AG04449 (cell line): ENCODE measurements at regions of chr17 and their contacts with region 1.

Region 1: DNA sequence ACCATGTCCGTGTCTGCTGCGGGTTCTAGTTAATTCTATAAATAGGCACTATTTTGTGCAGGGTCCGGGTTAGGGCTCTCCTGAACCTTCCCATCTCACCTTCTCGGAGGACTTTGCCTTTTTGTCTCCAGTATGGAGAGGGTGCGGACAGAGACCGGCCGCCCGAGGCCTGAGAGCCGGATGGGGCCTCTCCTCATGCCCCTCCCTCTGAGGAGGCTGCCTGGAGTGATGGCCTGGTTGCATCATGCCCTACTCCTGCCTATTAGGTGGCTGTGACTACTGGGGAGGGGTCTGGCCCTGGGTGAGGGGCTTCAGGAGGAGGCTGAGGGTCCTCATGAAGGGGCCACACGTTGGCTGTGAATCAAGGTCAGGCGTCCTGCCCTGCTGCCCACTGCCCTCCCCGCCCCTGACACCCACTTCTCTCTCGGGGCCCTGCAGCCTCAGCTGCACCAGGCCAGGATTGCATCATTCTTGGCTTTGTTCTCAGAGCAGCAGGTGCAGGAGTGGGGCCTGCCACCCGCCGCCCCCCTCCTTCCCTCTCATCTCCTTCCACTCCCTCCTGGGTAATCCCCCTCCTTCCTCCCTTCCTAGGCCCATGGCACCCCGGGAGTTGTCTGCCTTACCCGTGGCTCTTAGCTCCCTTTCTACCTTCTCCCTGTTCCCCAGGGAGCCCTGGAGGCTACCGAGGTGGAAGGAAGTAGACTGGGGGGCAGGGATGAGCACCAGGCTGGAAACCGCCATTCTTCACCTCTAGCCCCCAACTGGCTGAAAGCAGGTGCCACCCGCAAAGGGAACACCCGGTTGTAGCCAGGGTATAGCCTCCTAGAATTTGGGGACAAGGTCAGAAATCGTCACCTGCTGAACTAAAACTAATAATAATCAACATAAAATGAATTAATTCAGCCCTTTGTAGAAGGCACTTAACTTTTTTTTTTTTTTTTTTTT is 12.7 kb upstream of the ARHGAP23 start:
- DNase-seq: no peak
- H3K4me3 ChIP-seq: peak overlapping the region; percentile 36
- CTCF ChIP-seq: no peak

Region 2: GRCh38 chr17:38333635-38334295 is 81.8 kb before region 1 on chr17:
- CTCF ChIA-PET with region 1: interaction called, 21 read pairs
- POLR2A ChIA-PET with region 1: no interaction called
- DNase-seq: no peak
- H3K4me3 ChIP-seq: no peak overlapping the region
- CTCF ChIP-seq: peak; percentile 75

Region 3: DNA sequence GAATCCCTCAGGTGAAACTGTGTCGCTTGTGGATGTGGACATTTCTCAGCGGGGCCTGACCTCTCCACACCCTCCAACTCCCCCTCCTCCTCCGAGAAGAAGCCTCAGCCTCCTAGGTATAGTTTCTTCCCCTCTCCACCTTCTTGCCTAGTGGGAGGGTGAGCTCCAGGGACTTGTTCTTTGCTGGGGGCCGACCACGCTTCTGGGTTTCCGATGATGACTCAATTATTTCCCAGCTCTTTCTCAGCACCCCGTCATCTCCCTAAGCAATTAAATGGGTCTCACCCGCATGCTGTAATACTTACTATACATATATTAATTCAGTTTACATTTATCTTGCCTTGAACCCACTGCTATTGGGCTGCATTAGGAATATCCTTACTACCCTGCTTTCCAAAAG is 50.8 kb before region 1 on chr17:
- CTCF ChIA-PET with region 1: interaction called, 24 read pairs
- POLR2A ChIA-PET with region 1: no interaction called
- DNase-seq: no peak
- H3K4me3 ChIP-seq: no peak overlapping the region
- CTCF ChIP-seq: no peak

Region 4: GRCh38 chr17:38397227-38397626 is 18.3 kb before region 1 on chr17:
- CTCF ChIA-PET with region 1: interaction called, 16 read pairs
- POLR2A ChIA-PET with region 1: no interaction called
- DNase-seq: no peak
- H3K4me3 ChIP-seq: no peak overlapping the region
- CTCF ChIP-seq: no peak

Region 5: DNA sequence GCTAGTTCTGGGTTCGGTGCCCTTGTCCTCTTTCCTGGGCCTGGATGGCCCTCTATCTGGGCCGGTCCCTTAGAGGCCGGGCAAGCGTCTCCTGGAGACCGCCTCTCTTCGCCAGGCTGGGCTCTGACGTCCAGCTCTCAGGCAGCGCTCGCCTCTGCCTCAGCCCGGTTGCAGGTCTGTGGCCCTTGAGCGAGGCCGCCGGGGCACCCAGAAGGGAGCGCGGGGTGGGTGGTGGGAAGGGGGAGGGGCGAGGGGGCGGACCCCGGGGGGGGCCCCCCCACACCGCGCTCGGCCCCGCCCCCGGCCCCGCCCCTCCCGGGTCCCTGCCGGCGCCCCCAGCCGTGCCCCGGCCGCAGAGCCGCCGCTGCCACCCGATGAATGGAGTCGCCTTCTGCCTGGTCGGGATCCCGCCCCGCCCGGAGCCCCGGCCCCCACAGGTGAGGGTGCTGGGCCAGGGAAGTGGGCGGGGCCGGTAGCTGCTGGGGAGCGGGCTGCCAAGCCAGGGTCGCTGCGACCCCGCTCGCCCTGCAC is 12.7 kb after region 1 on chr17 and contains the start of gene ARHGAP23:
- CTCF ChIA-PET with region 1: interaction called, 25 read pairs
- POLR2A ChIA-PET with region 1: no interaction called
- DNase-seq: no peak
- H3K4me3 ChIP-seq: peak within 1 kb of the TSS; percentile 74
- CTCF ChIP-seq: no peak

Region 6: GRCh38 chr17:38557836-38558727 is 142.6 kb after region 1 on chr17:
- CTCF ChIA-PET with region 1: no interaction called
- POLR2A ChIA-PET with region 1: no interaction called
- DNase-seq: peak; percentile 28
- H3K4me3 ChIP-seq: peak overlapping the region; percentile 54
- CTCF ChIP-seq: peak; percentile 99

Region 7: GRCh38 chr17:38673714-38674330 is 258.3 kb after region 1 on chr17:
- CTCF ChIA-PET with region 1: no interaction called
- POLR2A ChIA-PET with region 1: no interaction called
- DNase-seq: no peak
- H3K4me3 ChIP-seq: peak overlapping the region; percentile 53
- CTCF ChIP-seq: no peak